ENCODE measurements at regions of chr15 and their contacts with region 1.

Region 1: GRCh38 chr15:67120839-67121643 is 55.6 kb downstream of the SMAD3 start:
- DNase-seq: peak in 1 of 2 experiments; percentile 56
- H3K4me3 ChIP-seq: no peak overlapping the region
- H3K27ac ChIP-seq: peak overlapping the region; percentile 98; the same call in 1 of the 2 replicates
- H3K4me1 ChIP-seq: peaks cover 76% of the 10 kb centered on the region
- H3K27me3 ChIP-seq: no peaks in the 10 kb centered on the region
- CTCF ChIP-seq: no peak

Region 2: GRCh38 chr15:66955001-66955516 is 166.0 kb before region 1 on chr15:
- CTCF ChIA-PET with region 1: interaction called, 3 read pairs
- POLR2A ChIA-PET with region 1: interaction called, 10 read pairs
- intact Hi-C with region 1: no loop called
- DNase-seq: peak in 1 of 2 experiments; percentile 54
- H3K4me3 ChIP-seq: no peak overlapping the region
- H3K27ac ChIP-seq: no peak overlapping the region
- H3K4me1 ChIP-seq: peaks cover 23% of the 10 kb centered on the region
- H3K27me3 ChIP-seq: no peaks in the 10 kb centered on the region
- CTCF ChIP-seq: no peak

Region 3: GRCh38 chr15:67175643-67176071 is 54.6 kb after region 1 on chr15:
- CTCF ChIA-PET with region 1: interaction called, 3 read pairs
- POLR2A ChIA-PET with region 1: interaction called, 8 read pairs
- intact Hi-C with region 1: loop called (anchors 1 kb)
- DNase-seq: no peak
- H3K4me3 ChIP-seq: no peak overlapping the region
- H3K27ac ChIP-seq: peak overlapping the region; percentile 85
- H3K4me1 ChIP-seq: peaks cover 60% of the 10 kb centered on the region
- H3K27me3 ChIP-seq: no peaks in the 10 kb centered on the region
- CTCF ChIP-seq: no peak